ENCODE measurements at regions of chr11 and their contacts with region 1.

Region 1: GRCh38 chr11:78564490-78565467 is 9.9 kb downstream of the NARS2 start:
- DNase-seq: no peak
- ATAC-seq: peak in 2 of 4 donors; percentile 58 to 82
- H3K4me3 ChIP-seq: no peak overlapping the region
- H3K27ac ChIP-seq: no peak overlapping the region
- H3K4me1 ChIP-seq: peaks cover 6% of the 10 kb centered on the region
- H3K27me3 ChIP-seq: no peaks in the 10 kb centered on the region
- CTCF ChIP-seq: peak; percentile 82

Region 2: DNA sequence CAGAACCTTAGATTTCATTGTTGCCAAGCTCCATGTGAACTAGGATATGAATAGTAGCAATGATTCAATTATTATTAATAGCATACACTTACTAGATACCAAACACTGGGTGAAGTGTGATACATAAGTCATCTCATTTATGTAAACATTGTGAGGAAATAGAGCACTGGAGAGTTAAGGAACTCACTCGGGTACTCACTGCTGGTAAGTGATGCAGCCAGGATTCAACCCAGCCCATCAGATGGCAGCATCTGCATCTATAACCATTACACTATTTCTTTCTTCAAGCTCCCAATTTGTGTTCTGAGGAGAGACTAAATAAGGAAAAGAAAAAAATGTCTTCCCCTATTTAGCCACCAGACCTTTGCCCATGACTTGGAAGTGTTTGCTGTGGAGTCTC is 415.1 kb before region 1 on chr11:
- intact Hi-C with region 1: loop called (anchors 5 to 10 kb)
- DNase-seq: no peak
- ATAC-seq: peak; percentile 68 to 98 (median 88)
- H3K4me3 ChIP-seq: no peak overlapping the region
- H3K27ac ChIP-seq: no peak overlapping the region
- H3K4me1 ChIP-seq: peaks cover 5% of the 10 kb centered on the region
- H3K27me3 ChIP-seq: no peaks in the 10 kb centered on the region
- CTCF ChIP-seq: peak; percentile 31

Region 3: DNA sequence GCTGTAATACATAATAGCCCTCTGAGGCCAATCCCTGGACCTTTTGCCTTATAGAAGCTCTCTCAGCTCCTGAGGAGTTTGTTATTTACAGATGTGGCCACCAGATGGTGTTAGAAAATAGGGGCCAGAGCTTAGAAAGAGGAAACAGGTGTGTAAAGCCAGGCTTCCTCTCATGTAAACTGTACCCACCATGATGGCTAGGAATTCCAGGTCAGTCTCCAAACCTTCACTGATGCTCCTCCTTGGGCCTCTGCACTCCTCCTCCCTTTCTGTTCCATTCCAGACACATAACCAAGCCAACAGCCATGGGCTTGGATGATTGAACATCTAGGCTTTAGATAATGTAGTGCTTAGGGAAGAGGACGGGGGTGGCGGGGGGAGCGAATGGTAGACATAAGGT is 336.3 kb before region 1 on chr11:
- intact Hi-C with region 1: loop called (anchors 1 to 5 kb)
- DNase-seq: no peak
- ATAC-seq: peak in 3 of 4 donors; percentile 56 to 72 (median 57)
- H3K4me3 ChIP-seq: no peak overlapping the region
- H3K27ac ChIP-seq: no peak overlapping the region
- H3K4me1 ChIP-seq: peaks cover 12% of the 10 kb centered on the region
- H3K27me3 ChIP-seq: no peaks in the 10 kb centered on the region
- CTCF ChIP-seq: peak; percentile 55

Region 4: GRCh38 chr11:78659326-78660270 is 94.8 kb after region 1 on chr11:
- intact Hi-C with region 1: no loop called
- DNase-seq: no peak
- ATAC-seq: no peak
- H3K4me3 ChIP-seq: no peak overlapping the region
- H3K27ac ChIP-seq: no peak overlapping the region
- H3K4me1 ChIP-seq: no peaks in the 10 kb centered on the region
- H3K27me3 ChIP-seq: no peaks in the 10 kb centered on the region
- CTCF ChIP-seq: no peak

Measured in psoas muscle (tissue), 8 donors.